Activated T-helper 1 cell treated with anti-CD3 and anti-CD28 coated beads, Interleukin-12 subunit alpha, Interleukin-12 subunit beta, Interleukin-2, Interleukin-4 antibody, amounts not matched to agents 30 ng/mL and 10 ng/mL and 1 ng/mL, durations not matched to agents 14 hours and 24 hours and 36 hours (primary cell): ENCODE measurements at regions of chr13 and their contacts with region 1.

Region 1: GRCh38 chr13:49247643-49248621 is at the start of gene CDADC1:
- DNase-seq: peak; percentile 90
- H3K4me3 Mint-ChIP-seq: peak within 1 kb of the TSS; percentile 97
- H3K27ac Mint-ChIP-seq: peak within 1 kb of the TSS; percentile 97
- H3K4me1 Mint-ChIP-seq: peaks cover 40% of the 10 kb centered on the region
- H3K27me3 Mint-ChIP-seq: peaks cover 14% of the 10 kb centered on the region
- total RNA-seq, gene CDADC1: 8.1 and 9.5 TPM in 2 replicates

Region 2: DNA sequence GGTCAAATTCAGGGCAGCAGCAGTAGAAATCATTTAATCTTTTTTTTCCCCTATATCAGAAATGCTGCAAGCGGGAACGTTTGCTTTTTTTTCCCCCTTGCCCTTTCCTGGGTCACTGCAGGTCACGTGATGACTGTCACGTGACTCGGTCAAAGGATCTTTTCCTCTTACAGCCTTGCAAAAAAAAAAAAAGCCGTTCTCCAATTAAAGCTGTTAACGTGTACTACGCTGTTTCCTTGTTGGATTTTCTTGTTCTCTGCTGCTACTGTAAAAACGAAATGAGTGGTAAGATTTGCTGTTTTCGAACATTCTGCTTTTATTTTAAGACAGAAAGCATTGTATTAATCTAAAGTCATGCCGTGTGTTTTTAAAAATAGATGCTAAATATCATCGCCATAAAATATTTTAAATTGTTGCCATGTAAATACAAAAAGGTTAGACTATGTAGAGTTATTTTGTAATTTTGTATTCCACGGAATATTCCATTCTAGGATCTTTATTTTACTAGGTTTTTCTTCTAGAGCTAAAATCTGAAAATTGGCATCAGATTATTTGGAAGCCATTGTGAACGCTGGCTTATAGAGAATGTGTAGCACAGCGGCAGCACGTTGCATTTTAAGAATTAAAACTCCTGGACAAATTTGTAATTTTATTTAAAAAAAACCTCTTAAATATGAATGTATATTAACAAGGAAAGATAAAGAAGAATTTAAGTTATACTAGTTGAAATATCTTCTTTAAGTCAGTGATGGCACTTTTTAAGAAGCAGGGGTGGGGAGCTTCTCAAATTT is 137.6 kb before region 1 on chr13:
- intact Hi-C with region 1: loop called (anchors 2 kb)
- DNase-seq: peak; percentile 71
- H3K4me3 Mint-ChIP-seq: peak overlapping the region; percentile 87
- H3K27ac Mint-ChIP-seq: peak overlapping the region; percentile 70
- H3K4me1 Mint-ChIP-seq: peaks cover 31% of the 10 kb centered on the region
- H3K27me3 Mint-ChIP-seq: no peaks in the 10 kb centered on the region

Region 3: DNA sequence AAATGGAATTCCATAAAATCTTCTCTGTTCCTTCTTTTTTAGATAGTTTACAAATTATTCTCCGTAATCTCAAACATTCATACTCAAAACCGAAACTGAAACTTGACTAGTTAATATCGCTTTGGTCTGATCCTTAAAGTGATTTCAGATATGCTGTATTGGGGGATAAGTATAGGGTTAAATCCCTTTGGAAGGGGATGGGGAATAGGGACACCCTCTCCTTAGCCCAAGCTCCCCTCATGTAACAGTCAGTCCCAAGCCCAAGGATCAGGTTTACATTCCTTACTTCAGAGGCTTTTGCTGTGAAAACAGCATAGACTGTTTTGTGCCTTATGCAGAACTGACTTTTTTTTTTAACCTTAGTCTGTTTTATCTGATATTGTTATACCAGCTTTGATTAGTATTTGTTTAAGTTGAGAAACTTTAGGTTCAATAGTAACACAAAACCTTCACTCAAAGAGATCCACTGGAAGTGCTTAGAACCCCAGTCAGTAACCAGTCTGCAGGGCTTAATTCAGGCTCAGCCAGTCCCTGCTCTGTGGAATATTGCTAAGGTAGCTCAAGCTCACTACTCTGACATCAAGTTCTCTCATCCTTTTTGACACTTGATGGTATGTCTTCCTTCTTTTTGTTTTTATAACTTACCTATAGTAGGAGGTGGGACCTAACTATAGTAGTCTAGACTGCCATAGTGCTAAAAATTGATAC is 10.3 kb after region 1 on chr13:
- intact Hi-C with region 1: loop called (anchors 1 kb)
- DNase-seq: no peak
- H3K4me3 Mint-ChIP-seq: peak overlapping the region; percentile 86
- H3K27ac Mint-ChIP-seq: peak overlapping the region; percentile 78
- H3K4me1 Mint-ChIP-seq: peaks cover 46% of the 10 kb centered on the region
- H3K27me3 Mint-ChIP-seq: no peaks in the 10 kb centered on the region

Region 4: GRCh38 chr13:49936085-49936940 is 688.4 kb after region 1 on chr13 and contains the start of gene SPRYD7:
- intact Hi-C with region 1: loop called (anchors 5 kb)
- DNase-seq: peak; percentile 92
- H3K4me3 Mint-ChIP-seq: peak within 1 kb of the TSS; percentile 94
- H3K27ac Mint-ChIP-seq: peak within 1 kb of the TSS; percentile 87
- H3K4me1 Mint-ChIP-seq: peaks cover 11% of the 10 kb centered on the region
- H3K27me3 Mint-ChIP-seq: peaks cover 22% of the 10 kb centered on the region
- total RNA-seq, gene SPRYD7: 6.9 and 7.0 TPM in 2 replicates